ENCODE measurements at regions of chr17 and their contacts with region 1.

Region 1: DNA sequence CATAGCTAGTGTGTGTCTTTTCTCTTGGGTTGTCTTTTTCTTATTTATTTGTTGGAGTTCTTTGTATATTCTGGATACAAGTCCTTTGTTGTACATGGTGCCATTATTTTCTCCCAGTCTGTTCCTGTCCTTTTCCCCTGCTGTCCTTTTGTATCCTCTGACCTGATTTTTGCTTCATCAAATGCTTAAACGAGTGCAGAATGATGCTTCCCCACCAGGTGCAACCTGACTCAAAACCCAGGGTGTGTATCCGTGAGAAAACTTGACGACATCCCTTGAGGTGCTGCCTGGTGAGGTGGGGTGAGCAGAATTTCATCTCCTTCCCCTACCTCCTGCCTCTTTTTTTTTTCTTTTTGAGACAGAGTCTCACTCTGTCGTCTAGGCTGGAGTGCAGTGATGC is 88.6 kb downstream of the NTN1 start:
- DNase-seq: no peak
- ATAC-seq: no peak
- H3K4me3 ChIP-seq: no peak overlapping the region
- H3K27ac ChIP-seq: no peak overlapping the region
- H3K4me1 ChIP-seq: peaks cover 0 to 8% (median under 1%) of the 10 kb centered on the region in 12 donors
- H3K27me3 ChIP-seq: no peaks in the 10 kb centered on the region
- CTCF ChIP-seq: no peak
- POLR2A ChIP-seq: no peak

Region 2: GRCh38 chr17:9072696-9073339 is 37.1 kb before region 1 on chr17:
- intact Hi-C with region 1: loop called in 1 of 10 experiments (anchors 5 kb)
- DNase-seq: peak; percentile 53 to 79 (median 67)
- ATAC-seq: peak in 3 of 4 donors; percentile 35 to 68 (median 47)
- H3K4me3 ChIP-seq: peak overlapping the region in 3 of 12 donors; percentile 0 to 5 (median 1)
- H3K27ac ChIP-seq: peak overlapping the region in 10 of 12 donors; percentile 5 to 69 (median 46)
- H3K4me1 ChIP-seq: peaks cover 0 to 46% (median 25%) of the 10 kb centered on the region in 12 donors
- H3K27me3 ChIP-seq: no peaks in the 10 kb centered on the region
- CTCF ChIP-seq: no peak
- POLR2A ChIP-seq: no peak

Region 3: DNA sequence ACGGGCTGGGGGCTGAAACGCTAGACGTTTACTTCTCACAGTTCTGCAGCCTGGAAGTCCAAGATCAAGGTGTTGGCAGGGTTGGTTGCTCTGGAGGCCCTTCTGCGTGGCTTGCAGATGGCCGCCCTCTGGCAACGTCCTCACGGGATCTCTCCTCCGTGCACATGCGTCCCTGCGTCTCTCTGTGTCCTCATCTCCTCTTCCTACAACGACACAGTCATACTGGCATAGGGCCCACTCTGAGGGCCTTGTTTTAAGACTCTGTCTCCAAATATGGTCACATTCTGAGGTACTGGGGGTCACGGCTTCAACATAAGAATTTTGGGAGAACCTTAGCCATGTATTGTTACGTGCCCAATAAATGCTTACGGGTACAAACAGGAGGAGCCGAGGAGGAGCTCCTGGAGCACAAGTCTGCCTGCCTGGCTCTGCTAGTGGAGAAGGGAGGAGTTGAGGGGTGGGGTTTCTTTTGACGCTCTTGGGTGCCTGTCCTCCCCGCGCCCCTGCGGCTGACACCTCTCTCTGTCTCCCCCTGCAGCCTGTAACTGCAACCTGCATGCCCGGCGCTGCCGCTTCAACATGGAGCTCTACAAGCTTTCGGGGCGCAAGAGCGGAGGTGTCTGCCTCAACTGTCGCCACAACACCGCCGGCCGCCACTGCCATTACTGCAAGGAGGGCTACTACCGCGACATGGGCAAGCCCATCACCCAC is 52.5 kb after region 1 on chr17:
- intact Hi-C with region 1: no loop called
- DNase-seq: no peak
- ATAC-seq: no peak
- H3K4me3 ChIP-seq: no peak overlapping the region
- H3K27ac ChIP-seq: no peak overlapping the region
- H3K4me1 ChIP-seq: peaks cover 0 to 2% (median 0%) of the 10 kb centered on the region in 12 donors
- H3K27me3 ChIP-seq: no peaks in the 10 kb centered on the region
- CTCF ChIP-seq: no peak
- POLR2A ChIP-seq: no peak

Measured in heart left ventricle (tissue), 16 donors.